ENCODE measurements at regions of chr20 and their contacts with region 1.

Region 1: GRCh38 chr20:49610701-49611538 is 43.0 kb upstream of the PTGIS start:
- DNase-seq: peak; percentile 87
- ATAC-seq: peak; percentile 73
- H3K4me3 Mint-ChIP-seq: peak overlapping the region; percentile 55
- H3K27ac Mint-ChIP-seq: peak overlapping the region; percentile 63
- H3K4me1 Mint-ChIP-seq: peaks cover 26% of the 10 kb centered on the region
- H3K27me3 Mint-ChIP-seq: no peaks in the 10 kb centered on the region

Region 2: GRCh38 chr20:49583669-49584417 is 27.1 kb before region 1 on chr20:
- CTCF ChIA-PET with region 1: interaction called, 27 read pairs
- DNase-seq: no peak
- ATAC-seq: no peak
- H3K4me3 Mint-ChIP-seq: no peak overlapping the region
- H3K27ac Mint-ChIP-seq: no peak overlapping the region
- H3K4me1 Mint-ChIP-seq: peaks cover 38% of the 10 kb centered on the region
- H3K27me3 Mint-ChIP-seq: no peaks in the 10 kb centered on the region

Region 3: GRCh38 chr20:49636447-49636846 is 25.5 kb after region 1 on chr20:
- CTCF ChIA-PET with region 1: interaction called, 10 read pairs
- DNase-seq: no peak
- ATAC-seq: no peak
- H3K4me3 Mint-ChIP-seq: no peak overlapping the region
- H3K27ac Mint-ChIP-seq: no peak overlapping the region
- H3K4me1 Mint-ChIP-seq: peaks cover 21% of the 10 kb centered on the region
- H3K27me3 Mint-ChIP-seq: no peaks in the 10 kb centered on the region

Region 4: GRCh38 chr20:49835031-49835430 is 224.1 kb after region 1 on chr20:
- CTCF ChIA-PET with region 1: interaction called, 18 read pairs
- DNase-seq: no peak
- ATAC-seq: no peak
- H3K4me3 Mint-ChIP-seq: no peak overlapping the region
- H3K27ac Mint-ChIP-seq: no peak overlapping the region
- H3K4me1 Mint-ChIP-seq: no peaks in the 10 kb centered on the region
- H3K27me3 Mint-ChIP-seq: no peaks in the 10 kb centered on the region

Region 5: DNA sequence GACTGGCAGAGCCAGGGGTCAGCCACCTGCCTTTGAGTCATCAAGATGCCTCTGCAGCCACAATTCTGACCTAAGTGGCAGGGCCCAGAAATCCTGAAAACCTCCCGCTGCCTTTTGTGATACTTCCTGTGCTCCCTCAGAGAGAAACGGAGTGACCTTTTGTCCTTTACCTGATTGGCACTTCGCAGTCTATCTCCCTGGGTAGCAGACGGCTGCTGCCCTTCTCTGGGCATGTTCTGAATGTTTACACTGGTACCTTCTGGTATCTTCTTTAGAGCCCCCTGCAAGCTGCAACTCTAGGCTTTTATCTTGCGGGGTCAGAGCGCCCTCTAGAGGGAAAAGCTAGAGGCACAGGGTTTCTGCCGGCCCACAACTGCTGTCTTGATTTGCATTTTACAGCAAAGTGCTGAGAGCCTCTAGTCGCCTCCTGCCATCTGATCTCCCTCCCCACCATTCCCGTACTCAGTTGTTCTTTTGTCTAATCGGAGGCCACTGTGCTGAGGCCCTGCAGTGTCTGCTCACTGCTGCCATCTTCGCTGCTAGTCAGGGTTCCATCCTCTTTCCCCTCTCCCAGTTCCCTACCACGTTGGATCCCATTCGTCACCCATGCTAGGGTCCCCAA is 277.5 kb after region 1 on chr20:
- CTCF ChIA-PET with region 1: interaction called, 30 read pairs
- DNase-seq: peak; percentile 73
- ATAC-seq: peak; percentile 48
- H3K4me3 Mint-ChIP-seq: no peak overlapping the region
- H3K27ac Mint-ChIP-seq: peak overlapping the region; percentile 29
- H3K4me1 Mint-ChIP-seq: peaks cover 40% of the 10 kb centered on the region
- H3K27me3 Mint-ChIP-seq: no peaks in the 10 kb centered on the region